Colonic mucosa (tissue), 4 donors: ENCODE measurements at regions of chr2 and their contacts with region 1.

Region 1: GRCh38 chr2:135164441-135164840 is 112.3 kb downstream of the RAB3GAP1 start:
- DNase-seq: no peak
- H3K4me3 ChIP-seq: no peak overlapping the region
- H3K27ac ChIP-seq: no peak overlapping the region
- H3K4me1 ChIP-seq: no peaks in the 10 kb centered on the region
- H3K27me3 ChIP-seq: no peaks in the 10 kb centered on the region
- CTCF ChIP-seq: no peak

Region 2: GRCh38 chr2:135424839-135425238 is 260.4 kb after region 1 on chr2:
- intact Hi-C with region 1: no loop called
- DNase-seq: no peak
- H3K4me3 ChIP-seq: no peak overlapping the region
- H3K27ac ChIP-seq: no peak overlapping the region
- H3K4me1 ChIP-seq: no peaks in the 10 kb centered on the region
- H3K27me3 ChIP-seq: no peaks in the 10 kb centered on the region
- CTCF ChIP-seq: no peak

Region 3: DNA sequence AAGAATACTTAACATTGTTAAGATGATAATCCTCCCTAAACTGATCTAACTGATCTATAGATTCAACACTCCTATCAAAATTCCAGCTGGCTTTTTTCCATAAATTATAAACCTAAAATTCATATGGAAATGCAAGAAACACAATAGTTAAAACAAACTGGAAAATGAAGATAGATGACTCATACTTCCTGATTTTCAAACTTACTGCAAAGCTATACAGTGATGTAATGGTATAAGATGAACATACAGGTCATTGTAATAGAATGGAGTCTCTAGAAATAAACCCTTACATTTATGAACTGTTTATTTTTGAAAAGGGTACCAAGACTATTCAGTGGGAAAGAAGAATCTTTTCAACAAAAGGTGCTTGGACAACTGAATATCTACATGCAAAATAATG is 609.5 kb after region 1 on chr2:
- intact Hi-C with region 1: loop called (anchors 10 kb)
- DNase-seq: no peak
- H3K4me3 ChIP-seq: no peak overlapping the region
- H3K27ac ChIP-seq: no peak overlapping the region
- H3K4me1 ChIP-seq: no peaks in the 10 kb centered on the region
- H3K27me3 ChIP-seq: no peaks in the 10 kb centered on the region
- CTCF ChIP-seq: no peak